ENCODE measurements at regions of chr1 and their contacts with region 1.

Region 1: GRCh38 chr1:145891587-145892485 is 6.2 kb upstream of the ANKRD35 start:
- DNase-seq: peak; percentile 76
- CTCF ChIP-seq: peak; percentile 85

Region 2: GRCh38 chr1:145782166-145783099 is 109.4 kb before region 1 on chr1:
- CTCF ChIA-PET with region 1: no interaction called
- POLR2A ChIA-PET with region 1: no interaction called
- DNase-seq: no peak
- CTCF ChIP-seq: no peak

Region 3: DNA sequence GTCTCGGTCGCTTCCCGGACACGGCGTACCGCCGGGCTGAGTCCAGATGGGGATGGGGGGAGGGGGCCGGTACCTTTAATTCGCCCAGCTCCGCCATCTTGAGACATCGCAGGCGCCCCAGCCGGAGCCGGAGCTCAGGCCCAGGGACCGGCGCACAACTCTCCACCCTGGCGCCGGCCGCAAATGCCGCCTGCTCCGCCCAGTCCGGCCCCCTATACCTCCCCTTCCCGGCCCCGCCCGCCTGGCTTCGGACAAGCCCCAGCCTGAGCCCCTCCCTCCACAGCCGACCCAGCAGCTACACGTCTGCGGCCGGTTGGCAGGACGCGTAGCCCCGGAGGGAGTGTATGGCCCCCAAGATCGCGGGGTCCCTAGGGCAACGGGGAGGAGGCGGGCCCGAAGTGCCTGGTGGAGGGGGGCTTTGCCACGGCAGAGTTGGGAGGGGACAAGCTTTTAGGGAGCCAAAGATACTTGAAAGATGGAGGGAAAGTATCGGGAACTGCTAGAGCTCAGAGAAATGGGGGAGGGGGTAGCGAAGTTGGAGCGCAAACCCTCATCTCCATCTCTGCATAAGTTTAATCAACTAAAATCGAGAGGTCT is 32.8 kb before region 1 on chr1 and contains the start of gene PIAS3:
- CTCF ChIA-PET with region 1: interaction called, 25 read pairs
- POLR2A ChIA-PET with region 1: no interaction called
- DNase-seq: peak; percentile 97
- CTCF ChIP-seq: no peak

Region 4: GRCh38 chr1:145879775-145880174 is 12.1 kb before region 1 on chr1:
- CTCF ChIA-PET with region 1: interaction called, 75 read pairs
- POLR2A ChIA-PET with region 1: no interaction called
- DNase-seq: no peak
- CTCF ChIP-seq: no peak

Region 5: DNA sequence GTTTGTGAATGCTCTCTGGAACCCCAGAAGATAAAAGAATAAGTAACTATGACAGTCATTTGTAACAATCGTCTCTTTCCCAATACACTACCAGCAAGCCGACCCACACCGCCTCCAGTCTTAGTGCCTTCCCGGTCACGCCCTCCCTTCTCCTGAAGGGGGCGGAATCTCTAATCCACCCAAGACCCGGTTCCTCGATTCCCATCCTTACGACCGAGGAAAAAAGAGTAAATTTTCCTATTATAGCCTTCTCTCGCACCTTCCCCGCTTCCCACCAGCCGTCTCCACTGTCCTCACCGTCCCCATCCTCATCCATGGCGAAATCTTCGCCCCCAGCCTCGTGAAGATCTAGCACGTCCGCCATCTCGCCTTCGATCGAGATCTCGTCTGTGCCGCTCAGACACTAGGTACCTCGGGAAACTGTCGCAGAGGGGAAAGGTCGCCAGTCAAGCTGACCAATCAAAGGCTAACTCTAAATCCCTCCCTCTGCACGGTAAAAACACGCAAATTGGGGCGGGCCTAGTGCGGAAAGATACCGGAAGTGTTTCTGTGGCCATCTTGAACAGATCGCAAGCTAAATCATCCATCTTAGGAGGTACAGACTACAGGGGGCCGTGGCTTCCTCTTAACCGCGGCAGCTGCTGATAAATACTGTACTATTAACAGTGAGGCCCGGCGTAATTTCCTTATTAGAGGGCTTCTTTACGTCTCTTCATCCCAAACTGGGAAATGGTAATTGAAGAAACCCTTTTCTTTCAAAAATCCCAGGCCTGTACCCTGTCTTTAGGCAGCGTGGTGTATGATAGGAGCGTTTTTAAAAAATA is 35.4 kb after region 1 on chr1 and contains the start of gene RBM8A:
- CTCF ChIA-PET with region 1: interaction called, 12 read pairs
- POLR2A ChIA-PET with region 1: interaction called, 3 read pairs
- DNase-seq: peak; percentile 89
- CTCF ChIP-seq: peak; percentile 42

Region 6: DNA sequence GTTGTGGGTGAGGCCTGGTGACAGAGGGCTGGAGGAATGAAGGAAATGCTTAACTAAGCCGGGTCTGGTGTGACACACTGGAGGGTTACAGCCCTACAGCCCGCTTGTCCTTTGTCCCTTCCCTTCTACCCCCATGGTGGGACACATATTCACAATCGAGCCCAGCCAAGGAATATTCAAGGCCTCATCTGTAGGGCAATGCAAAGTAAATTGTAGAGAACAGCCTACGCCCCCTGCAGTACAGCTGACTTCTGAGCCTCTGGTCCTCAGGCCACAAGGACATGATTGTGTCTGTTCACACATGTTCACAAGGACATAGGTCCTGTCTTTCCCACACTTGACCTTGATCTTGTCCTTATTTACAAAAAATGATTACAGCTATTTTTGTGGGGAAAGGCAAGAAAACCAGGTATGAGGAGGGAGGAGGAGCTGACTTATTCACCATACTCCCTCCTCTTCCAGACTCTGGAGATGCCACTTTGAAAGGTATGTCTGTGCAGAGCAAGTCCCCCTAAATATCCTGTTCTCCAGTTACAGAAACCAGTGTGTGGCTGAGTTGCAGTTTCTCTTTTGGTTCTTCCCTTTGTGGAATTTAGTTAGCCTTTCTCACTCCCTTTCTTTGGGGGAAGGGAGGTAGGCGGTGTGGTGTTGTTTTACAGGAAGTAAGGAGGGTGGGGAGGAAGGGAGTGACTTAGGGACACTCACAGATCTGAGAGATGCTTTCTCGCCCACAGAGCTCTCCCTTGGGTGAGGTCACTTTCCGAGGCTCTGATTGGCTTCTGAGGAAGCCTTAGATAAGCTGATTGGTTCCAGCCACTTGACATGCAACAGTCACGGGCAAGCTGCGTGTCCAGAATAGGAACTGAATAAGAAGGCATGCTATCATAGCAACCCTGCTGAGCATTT is 87.3 kb after region 1 on chr1:
- CTCF ChIA-PET with region 1: interaction called, 19 read pairs
- POLR2A ChIA-PET with region 1: no interaction called
- DNase-seq: peak; percentile 85
- CTCF ChIP-seq: peak; percentile 42

Region 7: GRCh38 chr1:146012737-146013403 is 121.0 kb after region 1 on chr1:
- CTCF ChIA-PET with region 1: interaction called, 36 read pairs
- POLR2A ChIA-PET with region 1: no interaction called
- DNase-seq: peak; percentile 65
- CTCF ChIP-seq: peak; percentile 77

Region 8: DNA sequence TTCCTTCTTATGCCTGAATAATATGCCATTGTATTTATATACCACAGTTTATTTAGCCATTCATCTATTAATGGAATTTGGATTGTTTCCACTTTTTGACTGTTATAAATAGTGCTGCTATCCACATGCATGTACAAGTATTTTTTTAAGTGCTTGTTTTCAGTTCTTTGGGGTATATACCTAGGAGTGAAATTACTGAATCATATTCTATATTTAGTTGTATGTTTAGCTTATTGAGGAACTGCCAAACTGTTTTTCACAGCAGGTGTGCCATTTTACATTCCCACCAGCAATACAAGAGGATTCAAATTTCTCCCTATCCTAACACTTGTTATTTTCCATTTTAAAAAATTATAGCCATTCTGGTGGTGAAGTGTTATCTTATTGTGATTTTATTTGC is 137.3 kb after region 1 on chr1:
- CTCF ChIA-PET with region 1: no interaction called
- POLR2A ChIA-PET with region 1: no interaction called
- DNase-seq: no peak
- CTCF ChIP-seq: no peak